ENCODE measurements at regions of chr7 and their contacts with region 1.

Region 1: DNA sequence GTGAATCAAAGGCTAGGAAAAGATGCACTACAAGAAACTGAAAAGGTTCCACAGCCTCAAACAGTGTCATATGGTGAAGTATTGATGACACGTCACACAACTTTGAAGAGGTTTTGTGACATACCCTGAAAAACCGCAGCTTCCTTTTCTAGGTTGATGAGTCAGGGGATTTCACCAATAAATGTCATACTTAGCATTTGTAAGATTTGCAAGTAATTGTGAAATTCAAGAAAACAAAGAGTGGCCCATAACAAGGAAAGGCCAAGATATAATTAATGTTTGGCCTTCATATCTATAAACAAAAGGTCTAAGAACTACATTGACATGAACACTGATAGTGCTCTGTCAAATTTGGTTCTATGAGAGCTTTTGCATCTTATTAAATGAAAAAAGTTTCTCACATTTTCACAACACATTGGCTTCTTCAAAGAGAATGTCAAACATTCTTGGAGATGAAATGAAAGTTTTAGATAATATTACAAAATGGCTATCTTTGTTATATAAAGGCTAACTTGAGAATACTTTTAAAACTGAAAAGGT is 62.0 kb upstream of the NAMPT start:
- DNase-seq: peak; percentile 75
- H3K4me3 Mint-ChIP-seq: peak overlapping the region; percentile 15
- H3K27ac Mint-ChIP-seq: peak overlapping the region; percentile 97
- H3K4me1 Mint-ChIP-seq: peaks cover 55% of the 10 kb centered on the region
- H3K27me3 Mint-ChIP-seq: peaks cover 6% of the 10 kb centered on the region

Region 2: DNA sequence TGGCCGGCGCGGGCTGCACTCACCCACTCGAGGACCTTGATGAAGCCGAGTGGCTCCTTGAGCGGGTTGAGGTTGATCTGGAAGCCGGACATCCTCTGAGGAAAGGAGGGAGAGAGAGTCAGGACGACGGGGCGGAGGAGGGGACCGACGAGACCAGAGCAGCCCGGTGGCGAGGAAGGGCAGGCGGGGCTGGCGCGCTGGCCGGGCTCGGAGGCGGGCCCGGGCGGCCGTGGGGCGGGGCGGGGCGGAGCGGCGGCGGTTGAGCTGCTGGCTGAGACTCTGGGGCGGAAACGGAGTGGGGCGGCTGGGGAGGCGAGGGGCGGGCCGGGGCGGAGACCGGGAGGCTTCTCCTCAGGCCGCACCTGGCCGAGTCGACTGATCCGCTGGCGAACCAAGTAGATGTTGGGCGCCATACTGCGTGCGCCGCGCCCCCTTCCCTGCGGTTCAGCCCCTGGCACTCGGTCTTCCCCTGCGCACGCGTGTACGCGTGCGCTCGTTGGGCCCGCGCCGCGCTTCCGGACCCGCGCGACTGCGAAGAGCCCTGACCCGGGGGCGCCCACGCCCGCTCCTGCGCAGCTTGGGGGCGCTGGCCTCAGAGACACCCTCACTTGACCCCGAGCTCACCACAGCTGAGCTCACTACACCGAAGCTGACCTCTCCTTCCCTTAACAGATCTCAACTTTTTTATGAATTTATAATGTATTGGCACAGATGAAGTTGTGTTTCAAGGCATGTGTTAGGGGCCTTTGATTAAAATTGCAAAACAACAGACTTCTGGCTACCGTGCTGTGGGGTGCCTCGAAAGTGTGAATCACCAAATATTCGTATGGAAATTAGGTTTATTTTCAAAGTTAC is 234.4 kb before region 1 on chr7 and contains the start of gene SYPL1:
- CTCF ChIA-PET with region 1: no interaction called
- intact Hi-C with region 1: loop called (anchors 5 kb)
- DNase-seq: peak; percentile 94
- H3K4me3 Mint-ChIP-seq: peak within 1 kb of the TSS; percentile 85
- H3K27ac Mint-ChIP-seq: peak within 1 kb of the TSS; percentile 92
- H3K4me1 Mint-ChIP-seq: peaks cover 71% of the 10 kb centered on the region
- H3K27me3 Mint-ChIP-seq: no peaks in the 10 kb centered on the region
- total RNA-seq, gene SYPL1: 24.7 to 26.6 TPM

Region 3: GRCh38 chr7:106273009-106273668 is 73.6 kb before region 1 on chr7:
- CTCF ChIA-PET with region 1: no interaction called
- intact Hi-C with region 1: no loop called
- DNase-seq: no peak
- H3K4me3 Mint-ChIP-seq: no peak overlapping the region
- H3K27ac Mint-ChIP-seq: peak overlapping the region; percentile 56
- H3K4me1 Mint-ChIP-seq: peaks cover 46% of the 10 kb centered on the region
- H3K27me3 Mint-ChIP-seq: no peaks in the 10 kb centered on the region

Region 4: DNA sequence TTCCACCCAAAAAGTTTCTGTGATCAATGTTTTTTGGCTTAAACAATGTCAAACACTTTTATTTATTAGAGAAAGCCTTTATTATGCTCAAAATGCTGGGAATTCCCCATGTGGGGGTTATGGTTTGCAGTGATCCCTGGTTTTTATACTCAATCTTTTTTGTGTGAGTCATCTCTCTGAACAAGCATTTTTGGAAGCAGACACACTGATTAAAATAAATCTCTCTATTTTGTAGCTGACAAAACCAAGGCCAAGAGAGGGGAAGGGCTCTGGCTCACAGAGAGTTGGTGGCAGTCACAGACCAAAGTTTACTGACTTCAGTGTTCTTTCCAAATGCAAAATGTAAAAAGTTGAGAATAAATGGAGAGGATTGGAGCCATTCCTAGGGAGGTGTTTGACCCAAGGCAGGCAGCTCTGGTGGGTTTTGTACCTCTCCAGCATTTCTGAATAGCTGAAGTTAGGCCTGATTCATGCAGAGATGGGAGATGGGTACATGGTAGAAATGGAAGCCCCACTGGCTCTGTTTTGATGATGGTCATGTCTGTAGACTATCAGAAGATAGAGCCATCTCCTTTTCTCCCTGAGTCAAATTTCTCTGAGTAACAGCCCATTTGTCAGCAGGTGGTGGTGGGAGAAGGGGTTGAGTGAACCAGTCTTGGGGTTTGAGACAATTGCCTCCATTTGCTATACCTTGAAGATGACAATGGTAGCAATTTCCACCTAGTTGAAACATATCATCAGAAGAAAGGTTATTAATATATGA is 16.6 kb before region 1 on chr7:
- CTCF ChIA-PET with region 1: no interaction called
- intact Hi-C with region 1: loop called (anchors 1 kb)
- DNase-seq: peak; percentile 46
- H3K4me3 Mint-ChIP-seq: no peak overlapping the region
- H3K27ac Mint-ChIP-seq: peak overlapping the region; percentile 73
- H3K4me1 Mint-ChIP-seq: peaks cover 17% of the 10 kb centered on the region
- H3K27me3 Mint-ChIP-seq: peaks cover 22% of the 10 kb centered on the region

Region 5: GRCh38 chr7:106425017-106425719 is 78.4 kb after region 1 on chr7:
- CTCF ChIA-PET with region 1: no interaction called
- intact Hi-C with region 1: loop called (anchors 1 kb)
- DNase-seq: peak; percentile 96
- H3K4me3 Mint-ChIP-seq: peak overlapping the region; percentile 80
- H3K27ac Mint-ChIP-seq: peak overlapping the region; percentile 99
- H3K4me1 Mint-ChIP-seq: peaks cover 86% of the 10 kb centered on the region
- H3K27me3 Mint-ChIP-seq: peaks cover 3% of the 10 kb centered on the region

Region 6: DNA sequence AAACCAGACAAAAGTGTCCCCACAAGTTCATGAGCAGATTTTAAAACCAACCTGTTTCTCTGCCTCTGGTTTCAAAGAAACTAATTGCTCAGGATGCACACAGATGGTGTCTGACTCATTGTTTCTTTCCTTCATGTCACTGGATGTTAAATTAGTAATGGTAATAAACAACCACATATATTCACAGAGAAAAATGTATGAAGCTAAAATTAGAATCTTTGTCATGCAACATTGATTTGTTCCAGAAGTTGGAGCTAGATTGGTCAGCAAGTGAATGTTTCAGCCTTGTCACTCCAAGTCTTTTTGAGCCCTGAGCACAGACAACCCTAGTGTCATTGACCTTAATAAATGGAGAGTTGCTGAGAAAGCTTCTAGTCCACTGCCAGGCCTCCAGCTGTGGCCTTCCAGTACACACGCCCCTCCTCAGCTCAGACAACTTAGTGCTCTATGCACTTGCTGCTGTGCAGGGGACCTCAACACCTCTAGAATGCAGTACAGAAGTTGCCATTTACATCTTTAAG is 138.3 kb after region 1 on chr7:
- CTCF ChIA-PET with region 1: interaction called, 3 read pairs
- intact Hi-C with region 1: loop called (anchors 1 kb)
- DNase-seq: peak; percentile 26
- H3K4me3 Mint-ChIP-seq: no peak overlapping the region
- H3K27ac Mint-ChIP-seq: peak overlapping the region; percentile 81
- H3K4me1 Mint-ChIP-seq: peaks cover 57% of the 10 kb centered on the region
- H3K27me3 Mint-ChIP-seq: peaks cover 23% of the 10 kb centered on the region

Region 7: GRCh38 chr7:106736508-106737201 is 389.9 kb after region 1 on chr7:
- CTCF ChIA-PET with region 1: no interaction called
- intact Hi-C with region 1: loop called (anchors 5 kb)
- DNase-seq: peak; percentile 72
- H3K4me3 Mint-ChIP-seq: no peak overlapping the region
- H3K27ac Mint-ChIP-seq: peak overlapping the region; percentile 74
- H3K4me1 Mint-ChIP-seq: peaks cover 27% of the 10 kb centered on the region
- H3K27me3 Mint-ChIP-seq: no peaks in the 10 kb centered on the region